Body of pancreas (tissue), 4 donors: ENCODE measurements at regions of chr10 and their contacts with region 1.

Region 1: GRCh38 chr10:116287906-116288501 is 15.0 kb upstream of the GFRA1 start:
- DNase-seq: peak; percentile 31 to 54 (median 52)
- ATAC-seq: no peak
- H3K4me3 ChIP-seq: no peak overlapping the region
- H3K27ac ChIP-seq: no peak overlapping the region
- H3K4me1 ChIP-seq: no peaks in the 10 kb centered on the region
- H3K27me3 ChIP-seq: no peaks in the 10 kb centered on the region
- CTCF ChIP-seq: peak in 6 of 7 experiments; percentile 54 to 87 (median 76)
- POLR2A ChIP-seq: no peak

Region 2: GRCh38 chr10:115355162-115355760 is 932.7 kb before region 1 on chr10:
- intact Hi-C with region 1: loop called (anchors 10 kb)
- DNase-seq: peak; percentile 42 to 59 (median 50)
- ATAC-seq: peak; percentile 50
- H3K4me3 ChIP-seq: no peak overlapping the region
- H3K27ac ChIP-seq: no peak overlapping the region
- H3K4me1 ChIP-seq: no peaks in the 10 kb centered on the region
- H3K27me3 ChIP-seq: no peaks in the 10 kb centered on the region
- CTCF ChIP-seq: peak; percentile 44 to 84 (median 74)
- POLR2A ChIP-seq: no peak

Region 3: GRCh38 chr10:115795964-115796363 is 492.0 kb before region 1 on chr10:
- intact Hi-C with region 1: loop called (anchors 5 kb)
- DNase-seq: no peak
- ATAC-seq: no peak
- H3K4me3 ChIP-seq: no peak overlapping the region
- H3K27ac ChIP-seq: no peak overlapping the region
- H3K4me1 ChIP-seq: no peaks in the 10 kb centered on the region
- H3K27me3 ChIP-seq: no peaks in the 10 kb centered on the region
- CTCF ChIP-seq: no peak
- POLR2A ChIP-seq: no peak

Region 4: GRCh38 chr10:115801992-115802391 is 486.0 kb before region 1 on chr10:
- intact Hi-C with region 1: loop called (anchors 5 kb)
- DNase-seq: no peak
- ATAC-seq: no peak
- H3K4me3 ChIP-seq: no peak overlapping the region
- H3K27ac ChIP-seq: no peak overlapping the region
- H3K4me1 ChIP-seq: no peaks in the 10 kb centered on the region
- H3K27me3 ChIP-seq: no peaks in the 10 kb centered on the region
- CTCF ChIP-seq: no peak
- POLR2A ChIP-seq: no peak

Region 5: DNA sequence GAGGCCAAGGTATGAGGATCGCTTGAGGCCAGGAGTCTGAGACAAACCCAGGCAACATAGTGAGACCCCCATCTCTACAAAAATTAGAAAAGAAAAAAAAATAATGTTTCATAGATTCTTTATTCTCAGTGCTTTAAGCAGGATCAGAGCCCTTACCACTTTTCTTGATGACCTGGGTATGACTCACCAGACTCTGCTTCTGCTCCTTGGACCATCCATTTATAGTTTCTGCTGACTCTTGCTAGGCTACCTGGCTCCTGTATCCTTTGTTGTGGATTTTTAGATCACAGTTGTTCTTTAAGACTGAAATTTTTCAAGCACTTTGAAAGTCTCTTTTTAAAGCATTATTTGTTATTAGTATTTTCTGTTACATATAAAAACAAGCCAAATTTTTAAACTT is 426.1 kb before region 1 on chr10:
- intact Hi-C with region 1: no loop called
- DNase-seq: no peak
- ATAC-seq: no peak
- H3K4me3 ChIP-seq: no peak overlapping the region
- H3K27ac ChIP-seq: no peak overlapping the region
- H3K4me1 ChIP-seq: no peaks in the 10 kb centered on the region
- H3K27me3 ChIP-seq: no peaks in the 10 kb centered on the region
- CTCF ChIP-seq: no peak
- POLR2A ChIP-seq: no peak